ENCODE measurements at regions of chr19 and their contacts with region 1.

Region 1: DNA sequence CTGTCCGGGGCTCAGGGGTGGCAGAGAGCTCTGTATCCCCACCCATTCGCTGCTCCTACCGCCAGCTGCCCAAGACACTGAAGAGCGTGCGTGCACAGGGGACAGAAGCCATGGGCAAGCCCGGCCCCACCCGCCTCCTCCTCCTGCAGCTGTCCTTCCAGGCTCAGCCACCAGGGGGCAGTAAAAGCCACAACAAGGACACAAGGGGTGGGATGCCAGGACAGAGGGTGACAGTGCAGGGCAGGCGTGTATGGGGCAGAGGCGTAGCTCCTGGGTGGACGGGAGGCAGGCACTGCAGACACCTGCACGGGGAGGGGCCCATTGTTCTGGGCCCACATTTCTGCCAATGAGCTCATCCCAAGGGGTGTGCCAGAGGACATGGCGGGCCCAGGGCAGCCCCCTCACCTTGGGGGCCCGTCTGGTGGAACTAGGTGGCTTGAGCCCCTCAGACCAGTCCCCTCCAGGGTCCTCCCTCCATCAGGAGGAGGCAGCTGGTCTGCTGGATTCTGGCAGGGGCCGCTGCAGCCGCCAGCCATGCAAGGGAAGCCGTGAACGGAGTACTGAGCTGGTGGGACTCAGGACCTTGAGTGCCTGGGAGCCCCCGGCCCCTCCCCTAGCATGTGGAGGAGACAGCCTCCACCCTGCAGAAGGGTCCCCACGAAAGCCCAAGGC is 61.1 kb downstream of the MLLT1 start:
- DNase-seq: peak; percentile 84 to 93 (median 92)
- H3K4me3 ChIP-seq: no peak overlapping the region
- H3K27ac ChIP-seq: peak overlapping the region in 1 of 2 donors; percentile 74
- H3K4me1 ChIP-seq: peaks cover 56% of the 10 kb centered on the region
- H3K27me3 ChIP-seq: no peaks in the 10 kb centered on the region
- CTCF ChIP-seq: peak; percentile 89 to 98 (median 97)
- EP300 ChIP-seq: no peak
- POLR2A ChIP-seq: no peak

Region 2: GRCh38 chr19:6125571-6125989 is 93.0 kb before region 1 on chr19:
- intact Hi-C with region 1: no loop called
- DNase-seq: peak in 2 of 5 donors; percentile 24 to 53
- H3K4me3 ChIP-seq: no peak overlapping the region
- H3K27ac ChIP-seq: no peak overlapping the region
- H3K4me1 ChIP-seq: no peaks in the 10 kb centered on the region
- H3K27me3 ChIP-seq: no peaks in the 10 kb centered on the region
- CTCF ChIP-seq: peak; percentile 30 to 76 (median 41)
- EP300 ChIP-seq: no peak
- POLR2A ChIP-seq: no peak

Region 3: GRCh38 chr19:6141217-6141616 is 77.4 kb before region 1 on chr19:
- intact Hi-C with region 1: no loop called
- DNase-seq: no peak
- H3K4me3 ChIP-seq: no peak overlapping the region
- H3K27ac ChIP-seq: no peak overlapping the region
- H3K4me1 ChIP-seq: no peaks in the 10 kb centered on the region
- H3K27me3 ChIP-seq: no peaks in the 10 kb centered on the region
- CTCF ChIP-seq: no peak
- EP300 ChIP-seq: no peak
- POLR2A ChIP-seq: no peak

Region 4: DNA sequence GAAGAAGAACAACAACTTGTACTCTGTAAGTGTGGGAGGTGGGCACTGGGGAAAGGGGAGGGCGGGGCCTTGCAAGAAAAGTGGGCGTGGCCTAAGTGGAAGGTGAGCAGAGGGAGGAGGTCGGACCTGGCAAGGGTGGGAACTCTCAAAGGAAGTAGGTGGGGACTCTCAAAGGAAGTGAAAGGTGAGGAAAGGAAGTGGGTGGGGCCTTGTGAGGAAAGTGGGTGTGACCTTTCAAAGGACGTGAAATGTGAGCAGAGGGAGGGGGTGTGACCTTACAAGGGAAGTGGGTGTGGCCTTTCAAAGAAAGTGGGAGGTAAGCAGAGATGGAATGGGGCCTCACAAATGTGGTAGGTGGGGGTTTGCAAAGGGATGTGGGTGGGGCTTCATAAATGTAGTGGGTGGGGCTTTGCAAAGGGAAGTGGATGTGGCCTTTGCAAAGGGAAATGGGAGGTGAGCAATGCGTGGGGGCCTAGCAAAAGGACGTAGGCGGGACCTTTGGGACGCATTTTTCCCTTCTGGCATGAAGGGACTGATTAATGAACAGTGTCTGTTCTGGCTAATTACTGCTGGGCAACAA is 57.3 kb before region 1 on chr19:
- intact Hi-C with region 1: no loop called
- DNase-seq: no peak
- H3K4me3 ChIP-seq: no peak overlapping the region
- H3K27ac ChIP-seq: no peak overlapping the region
- H3K4me1 ChIP-seq: no peaks in the 10 kb centered on the region
- H3K27me3 ChIP-seq: no peaks in the 10 kb centered on the region
- CTCF ChIP-seq: no peak
- EP300 ChIP-seq: no peak
- POLR2A ChIP-seq: no peak

Region 5: GRCh38 chr19:6273701-6274601 is 55.3 kb after region 1 on chr19:
- intact Hi-C with region 1: loop called in 3 of 4 experiments (anchors 5 kb)
- DNase-seq: peak; percentile 76 to 87 (median 80)
- H3K4me3 ChIP-seq: peak overlapping the region; percentile 15
- H3K27ac ChIP-seq: peak overlapping the region; percentile 42 to 91
- H3K4me1 ChIP-seq: peaks cover 61% of the 10 kb centered on the region
- H3K27me3 ChIP-seq: no peaks in the 10 kb centered on the region
- CTCF ChIP-seq: no peak
- EP300 ChIP-seq: peak; percentile 79
- POLR2A ChIP-seq: no peak

Region 6: DNA sequence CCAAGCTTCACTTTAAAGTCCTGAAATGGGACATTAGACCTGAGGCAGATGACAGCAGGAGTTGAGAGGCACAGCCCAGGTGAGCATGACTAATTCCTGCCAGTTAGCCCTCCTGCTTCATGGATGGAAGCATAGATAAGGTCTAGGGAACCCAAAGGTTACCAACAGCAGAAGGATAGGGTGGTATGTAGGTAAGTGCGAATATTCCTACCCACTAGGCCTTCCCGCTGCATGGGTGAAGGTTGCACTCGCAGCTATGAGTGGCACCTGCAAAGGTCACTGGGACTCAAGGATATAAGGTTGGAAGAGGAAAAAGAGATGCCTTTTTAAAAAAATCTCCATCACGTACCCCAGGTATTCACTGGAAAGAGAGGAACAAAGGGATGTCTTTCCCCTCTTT is 73.4 kb after region 1 on chr19:
- intact Hi-C with region 1: loop called in 1 of 4 experiments (anchors 5 kb)
- DNase-seq: no peak
- H3K4me3 ChIP-seq: no peak overlapping the region
- H3K27ac ChIP-seq: no peak overlapping the region
- H3K4me1 ChIP-seq: no peaks in the 10 kb centered on the region
- H3K27me3 ChIP-seq: no peaks in the 10 kb centered on the region
- CTCF ChIP-seq: no peak
- EP300 ChIP-seq: no peak
- POLR2A ChIP-seq: no peak

Region 7: GRCh38 chr19:6362027-6362350 is 143.4 kb after region 1 on chr19:
- intact Hi-C with region 1: loop called in 1 of 4 experiments (anchors 5 kb)
- DNase-seq: peak in 3 of 5 donors; percentile 49 to 62 (median 59)
- H3K4me3 ChIP-seq: peak overlapping the region; percentile 65
- H3K27ac ChIP-seq: peak overlapping the region; percentile 73 to 92
- H3K4me1 ChIP-seq: peaks cover 2% of the 10 kb centered on the region
- H3K27me3 ChIP-seq: no peaks in the 10 kb centered on the region
- CTCF ChIP-seq: no peak
- EP300 ChIP-seq: no peak
- POLR2A ChIP-seq: no peak

Region 8: GRCh38 chr19:6740589-6741343 is 522.1 kb after region 1 on chr19:
- intact Hi-C with region 1: loop called in 1 of 4 experiments (anchors 10 kb)
- DNase-seq: peak; percentile 66 to 79 (median 77)
- H3K4me3 ChIP-seq: peak overlapping the region; percentile 60
- H3K27ac ChIP-seq: peak overlapping the region; percentile 82 to 83
- H3K4me1 ChIP-seq: peaks cover 29% of the 10 kb centered on the region
- H3K27me3 ChIP-seq: no peaks in the 10 kb centered on the region
- CTCF ChIP-seq: no peak
- EP300 ChIP-seq: peak; percentile 62
- POLR2A ChIP-seq: peak; percentile 28

Measured in ovary (tissue), 10 donors.